ENCODE measurements at regions of chr1 and their contacts with region 1.

Region 1: GRCh38 chr1:45490626-45491486 is at the start of gene TESK2:
- DNase-seq: peak; percentile 92 to 99 (median 98)
- H3K4me3 ChIP-seq: peak within 1 kb of the TSS; percentile 72
- H3K4me3 Mint-ChIP-seq: no peak within 1 kb of the TSS
- H3K27ac ChIP-seq: peak within 1 kb of the TSS; percentile 28
- H3K27ac Mint-ChIP-seq: no peak within 1 kb of the TSS
- H3K4me1 ChIP-seq: peaks cover 14% of the 10 kb centered on the region
- H3K4me1 Mint-ChIP-seq: peaks cover 6 to 11% (median 8%) of the 10 kb centered on the region in 3 donors
- H3K27me3 ChIP-seq: no peaks in the 10 kb centered on the region
- H3K27me3 Mint-ChIP-seq: no peaks in the 10 kb centered on the region
- total RNA-seq, gene TESK2: 2.9 to 3.6 TPM

Region 2: GRCh38 chr1:44730741-44731512 is 759.9 kb before region 1 on chr1 and contains the start of gene RNU5D-1:
- CTCF ChIA-PET with region 1: interaction called, 14 read pairs
- POLR2A ChIA-PET with region 1: no interaction called
- DNase-seq: peak; percentile 88 to 94 (median 90)
- H3K4me3 ChIP-seq: peak within 1 kb of the TSS; percentile 37
- H3K4me3 Mint-ChIP-seq: peak within 1 kb of the TSS; percentile 63 to 86 (median 78)
- H3K27ac ChIP-seq: peak within 1 kb of the TSS; percentile 97
- H3K27ac Mint-ChIP-seq: peak within 1 kb of the TSS; percentile 96 to 100 (median 100)
- H3K4me1 ChIP-seq: peaks cover 14% of the 10 kb centered on the region
- H3K4me1 Mint-ChIP-seq: peaks cover 19 to 36% (median 28%) of the 10 kb centered on the region in 3 donors
- H3K27me3 ChIP-seq: no peaks in the 10 kb centered on the region
- H3K27me3 Mint-ChIP-seq: no peaks in the 10 kb centered on the region
- total RNA-seq, gene RNU5D-1: not detected

Region 3: DNA sequence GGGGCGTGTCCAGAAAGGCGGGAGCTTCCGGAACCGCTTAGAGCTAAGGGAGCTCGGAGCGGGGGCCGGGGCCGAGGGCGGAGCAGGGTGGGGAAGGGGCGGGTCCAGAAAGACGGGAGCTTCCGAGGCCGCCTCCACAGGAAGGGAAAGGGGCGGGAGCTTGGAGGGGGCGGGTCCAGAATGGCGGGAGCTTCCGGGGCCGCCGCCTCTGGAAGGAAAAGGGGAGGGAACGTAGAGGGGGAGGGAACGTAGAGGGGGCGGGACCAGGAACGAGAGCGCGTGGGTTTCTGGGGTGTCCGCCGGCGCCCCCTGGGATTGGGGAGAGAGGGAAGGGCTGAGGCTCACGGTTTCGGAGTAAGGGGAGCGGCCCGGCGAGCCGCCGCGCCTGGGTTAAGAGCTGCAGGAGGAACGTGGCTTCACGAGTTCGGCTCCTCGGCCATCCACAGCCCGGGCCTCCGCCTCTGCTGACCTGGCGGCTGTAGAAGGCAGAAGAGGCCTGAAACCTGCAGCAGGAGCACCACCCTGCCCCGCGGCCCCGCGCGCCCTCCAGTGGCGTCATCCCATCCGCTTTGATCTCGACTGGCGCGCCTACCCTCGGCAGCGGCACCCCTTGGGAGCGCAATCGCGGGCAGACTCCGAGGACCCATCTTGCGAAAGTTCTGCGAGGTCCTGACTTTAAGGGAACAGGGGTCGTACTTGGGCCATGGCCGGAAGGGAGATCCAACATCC is 187.1 kb before region 1 on chr1:
- CTCF ChIA-PET with region 1: interaction called, 19 read pairs
- POLR2A ChIA-PET with region 1: interaction called, 11 read pairs
- DNase-seq: peak; percentile 93 to 98 (median 96)
- H3K4me3 ChIP-seq: peak overlapping the region; percentile 63
- H3K4me3 Mint-ChIP-seq: peak overlapping the region; percentile 90 to 97 (median 91)
- H3K27ac ChIP-seq: peak overlapping the region; percentile 88
- H3K27ac Mint-ChIP-seq: peak overlapping the region; percentile 94 to 99 (median 97)
- H3K4me1 ChIP-seq: peaks cover 8% of the 10 kb centered on the region
- H3K4me1 Mint-ChIP-seq: peaks cover 15 to 37% (median 30%) of the 10 kb centered on the region in 3 donors
- H3K27me3 ChIP-seq: no peaks in the 10 kb centered on the region
- H3K27me3 Mint-ChIP-seq: peaks cover 0 to 3% of the 10 kb centered on the region in 2 donors

Region 4: GRCh38 chr1:45359882-45360513 is 130.9 kb before region 1 on chr1:
- CTCF ChIA-PET with region 1: interaction called, 104 read pairs
- POLR2A ChIA-PET with region 1: no interaction called
- DNase-seq: peak; percentile 19 to 63 (median 30)
- H3K4me3 ChIP-seq: no peak overlapping the region
- H3K4me3 Mint-ChIP-seq: no peak overlapping the region
- H3K27ac ChIP-seq: no peak overlapping the region
- H3K27ac Mint-ChIP-seq: peak overlapping the region in 3 of 8 donors; percentile 33 to 48 (median 43)
- H3K4me1 ChIP-seq: no peaks in the 10 kb centered on the region
- H3K4me1 Mint-ChIP-seq: peaks cover 4 to 5% (median 4%) of the 10 kb centered on the region in 3 donors
- H3K27me3 ChIP-seq: no peaks in the 10 kb centered on the region
- H3K27me3 Mint-ChIP-seq: no peaks in the 10 kb centered on the region

Region 5: DNA sequence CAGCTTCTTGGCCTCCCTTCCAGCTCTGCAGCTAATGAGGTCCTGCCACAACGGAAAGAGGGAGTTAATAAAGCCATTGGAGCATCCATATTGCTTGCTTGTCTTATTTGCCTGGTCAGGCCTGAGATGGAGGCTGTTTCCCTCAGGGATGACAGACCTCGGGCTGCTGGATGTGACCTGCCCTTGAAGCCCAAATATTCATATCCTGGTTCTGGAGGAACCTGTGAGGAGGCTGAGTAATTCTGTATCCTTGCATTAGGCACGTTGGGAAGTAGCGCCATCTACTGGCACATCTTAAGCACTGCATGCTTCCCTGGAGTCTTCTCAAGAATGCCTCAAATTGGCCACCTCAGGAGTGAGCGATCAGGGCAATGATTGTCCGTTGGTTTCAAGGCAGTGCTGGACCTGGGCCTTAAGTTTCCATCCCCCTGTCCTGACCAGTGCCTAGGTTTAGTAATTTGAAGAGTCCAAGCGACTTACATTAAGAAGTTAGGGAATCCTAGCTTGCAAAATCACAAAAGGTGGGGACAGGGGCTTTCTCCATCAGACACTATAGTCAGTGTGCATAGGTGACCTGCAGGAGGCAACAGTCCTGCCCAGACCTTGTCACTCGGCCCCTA is 79.2 kb after region 1 on chr1:
- CTCF ChIA-PET with region 1: interaction called, 15 read pairs
- POLR2A ChIA-PET with region 1: no interaction called
- DNase-seq: peak; percentile 47 to 80 (median 64)
- H3K4me3 ChIP-seq: no peak overlapping the region
- H3K4me3 Mint-ChIP-seq: no peak overlapping the region
- H3K27ac ChIP-seq: no peak overlapping the region
- H3K27ac Mint-ChIP-seq: peak overlapping the region in 6 of 8 donors; percentile 21 to 86 (median 48)
- H3K4me1 ChIP-seq: no peaks in the 10 kb centered on the region
- H3K4me1 Mint-ChIP-seq: no peaks in the 10 kb centered on the region
- H3K27me3 ChIP-seq: no peaks in the 10 kb centered on the region
- H3K27me3 Mint-ChIP-seq: no peaks in the 10 kb centered on the region

Measured in CD8-positive, alpha-beta memory T cell (primary cell).